ENCODE measurements at regions of chrX and their contacts with region 1.

Region 1: GRCh38 chrX:154490414-154491083 is at the start of gene SLC10A3:
- DNase-seq: peak; percentile 94
- H3K4me3 ChIP-seq: peak within 1 kb of the TSS; percentile 79
- H3K27ac ChIP-seq: peak within 1 kb of the TSS; percentile 64
- H3K4me1 ChIP-seq: peaks cover 20% of the 10 kb centered on the region
- CTCF ChIP-seq: peak; percentile 48; the same call in 1 of the 2 replicates
- total RNA-seq, gene SLC10A3: 12.4 and 14.1 TPM in 2 replicates

Region 2: GRCh38 chrX:154428176-154429010 is 62.2 kb before region 1 on chrX and contains the start of gene ATP6AP1:
- CTCF ChIA-PET with region 1: no interaction called
- POLR2A ChIA-PET with region 1: interaction called, 6 read pairs
- intact Hi-C with region 1: loop called (anchors 5 kb)
- DNase-seq: peak; percentile 92
- H3K4me3 ChIP-seq: peak within 1 kb of the TSS; percentile 90
- H3K27ac ChIP-seq: peak within 1 kb of the TSS; percentile 47
- H3K4me1 ChIP-seq: peaks cover 14% of the 10 kb centered on the region
- CTCF ChIP-seq: no peak
- total RNA-seq, gene ATP6AP1: 22.2 and 26.4 TPM in 2 replicates

Region 3: DNA sequence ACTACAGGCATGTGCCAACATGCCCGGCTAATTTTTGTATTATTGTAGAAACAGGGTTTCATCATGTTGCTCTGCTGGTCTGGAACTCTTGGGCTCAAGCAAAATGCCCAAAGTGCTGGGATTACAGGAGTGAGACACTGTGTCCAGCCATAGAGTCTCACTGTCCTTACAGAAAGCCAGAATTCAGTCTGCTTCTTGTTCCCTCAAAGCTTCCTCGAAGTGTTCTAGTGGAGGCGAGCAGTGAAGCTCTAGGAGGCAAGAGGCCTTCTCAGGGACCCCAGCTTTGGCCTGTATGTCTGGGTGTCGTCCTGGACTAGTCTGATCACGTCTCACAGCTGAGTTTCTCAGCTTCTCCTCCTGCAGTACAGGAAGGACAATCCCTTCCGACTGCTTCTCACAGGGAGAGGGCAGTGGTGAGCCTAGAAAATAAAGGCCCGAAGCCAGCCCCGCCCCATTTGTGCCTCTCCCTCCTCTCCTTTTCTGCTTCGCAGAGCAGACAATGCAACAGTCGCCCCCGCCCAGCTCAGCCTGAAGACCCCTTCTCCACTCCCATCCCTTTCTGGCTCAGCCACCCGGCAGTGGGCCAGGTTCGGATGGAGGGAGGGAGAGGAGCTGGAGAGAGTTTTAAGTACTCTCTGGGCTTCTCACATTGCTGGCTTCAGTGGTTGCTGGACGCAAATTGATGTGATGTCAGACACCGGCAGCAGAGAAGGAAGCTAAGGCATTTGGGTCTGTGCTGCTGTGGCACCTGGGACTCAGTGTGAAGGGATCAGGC is 36.5 kb after region 1 on chrX:
- CTCF ChIA-PET with region 1: interaction called, 3 read pairs
- POLR2A ChIA-PET with region 1: interaction called, 12 read pairs
- intact Hi-C with region 1: loop called (anchors 5 kb)
- DNase-seq: peak; percentile 80
- H3K4me3 ChIP-seq: peak overlapping the region; percentile 62
- H3K27ac ChIP-seq: peak overlapping the region; percentile 66
- H3K4me1 ChIP-seq: peaks cover 12% of the 10 kb centered on the region
- CTCF ChIP-seq: peak; percentile 64

Region 4: DNA sequence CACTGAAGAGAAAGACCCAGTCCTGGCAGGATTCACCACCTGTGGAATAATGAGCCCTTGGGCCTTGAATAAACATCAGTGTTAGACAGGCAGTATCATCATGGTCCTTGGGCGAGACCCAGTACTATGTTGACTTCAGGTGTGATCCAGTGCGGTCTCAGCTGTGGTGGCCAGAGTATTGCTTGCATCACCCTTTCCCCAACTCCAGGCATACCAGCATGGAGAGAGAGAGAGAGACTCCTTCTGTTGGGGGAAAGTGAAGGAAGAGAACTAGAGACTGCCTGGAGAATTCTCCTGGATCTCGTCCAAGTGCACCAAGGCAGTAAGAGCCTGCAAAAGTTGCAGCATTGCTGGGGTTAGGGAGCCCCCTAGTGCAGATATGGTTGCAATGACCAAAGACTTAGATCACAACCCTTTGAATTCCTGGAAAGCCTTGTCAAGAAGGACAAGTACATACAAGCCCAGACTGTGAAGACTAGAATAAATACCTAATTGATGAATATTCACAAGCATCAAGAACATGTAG is 1329.5 kb after region 1 on chrX:
- CTCF ChIA-PET with region 1: no interaction called
- POLR2A ChIA-PET with region 1: no interaction called
- intact Hi-C with region 1: no loop called
- DNase-seq: peak; percentile 51
- H3K4me3 ChIP-seq: no peak overlapping the region
- H3K27ac ChIP-seq: no peak overlapping the region
- H3K4me1 ChIP-seq: no peaks in the 10 kb centered on the region
- CTCF ChIP-seq: peak; percentile 75